Activated CD4-positive, alpha-beta T cell treated with anti-CD3 and anti-CD28 coated beads for 36 hours (primary cell): ENCODE measurements at regions of chr10 and their contacts with region 1.

Region 1: DNA sequence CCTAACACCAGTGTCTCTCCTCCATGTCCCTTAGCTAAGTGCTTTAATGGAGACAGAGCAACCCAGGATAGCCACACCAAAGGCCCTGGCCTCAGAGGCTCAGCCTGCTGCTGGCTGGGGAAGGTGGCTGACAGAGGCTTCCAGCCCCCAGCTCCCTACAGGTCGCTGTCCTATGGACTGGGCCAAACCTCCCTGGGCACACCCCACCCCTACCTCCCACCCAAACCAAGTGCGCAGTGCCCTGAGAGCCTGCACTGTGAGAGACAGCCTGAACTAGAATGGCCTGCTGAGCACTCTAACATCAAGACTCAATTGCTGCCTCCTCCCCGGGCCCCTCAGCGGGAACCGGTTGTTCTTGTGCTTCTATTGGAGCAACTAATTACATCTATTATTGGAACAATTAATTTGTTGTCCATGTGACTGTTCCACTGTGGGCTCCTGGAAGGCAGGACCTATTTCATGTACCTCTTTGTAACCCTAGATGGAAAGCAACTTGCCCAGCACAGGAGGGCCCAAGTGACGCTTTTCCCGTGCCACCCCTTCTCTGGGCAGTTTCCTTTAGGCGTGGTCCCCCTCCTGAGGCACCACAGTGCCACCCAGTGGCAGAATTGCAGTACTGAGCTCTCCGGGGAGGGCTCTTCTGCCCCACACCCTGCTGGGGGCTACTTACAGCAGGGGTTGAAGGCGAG is 63.6 kb upstream of the WAPL start:
- DNase-seq: peak; percentile 85
- ATAC-seq: peak; percentile 98
- H3K4me3 Mint-ChIP-seq: no peak overlapping the region
- H3K27ac Mint-ChIP-seq: no peak overlapping the region
- H3K4me1 Mint-ChIP-seq: peaks cover 2% of the 10 kb centered on the region
- H3K27me3 Mint-ChIP-seq: no peaks in the 10 kb centered on the region

Region 2: GRCh38 chr10:86100581-86101061 is 484.6 kb before region 1 on chr10:
- CTCF ChIA-PET with region 1: no interaction called
- POLR2A ChIA-PET with region 1: no interaction called
- intact Hi-C with region 1: loop called in 1 of 2 experiments (anchors 5 kb)
- DNase-seq: peak; percentile 25
- ATAC-seq: peak; percentile 74
- H3K4me3 Mint-ChIP-seq: no peak overlapping the region
- H3K27ac Mint-ChIP-seq: no peak overlapping the region
- H3K4me1 Mint-ChIP-seq: no peaks in the 10 kb centered on the region
- H3K27me3 Mint-ChIP-seq: peaks cover 2% of the 10 kb centered on the region

Region 3: GRCh38 chr10:86261941-86262687 is 323.1 kb before region 1 on chr10:
- CTCF ChIA-PET with region 1: no interaction called
- POLR2A ChIA-PET with region 1: no interaction called
- intact Hi-C with region 1: loop called in 1 of 2 experiments (anchors 5 kb)
- DNase-seq: peak; percentile 43
- ATAC-seq: peak; percentile 72
- H3K4me3 Mint-ChIP-seq: no peak overlapping the region
- H3K27ac Mint-ChIP-seq: no peak overlapping the region
- H3K4me1 Mint-ChIP-seq: no peaks in the 10 kb centered on the region
- H3K27me3 Mint-ChIP-seq: peaks cover 27% of the 10 kb centered on the region

Region 4: GRCh38 chr10:86945361-86946212 is 360.4 kb after region 1 on chr10:
- CTCF ChIA-PET with region 1: no interaction called
- POLR2A ChIA-PET with region 1: no interaction called
- intact Hi-C with region 1: no loop called
- DNase-seq: no peak
- ATAC-seq: no peak
- H3K4me3 Mint-ChIP-seq: no peak overlapping the region
- H3K27ac Mint-ChIP-seq: no peak overlapping the region
- H3K4me1 Mint-ChIP-seq: peaks cover 4% of the 10 kb centered on the region
- H3K27me3 Mint-ChIP-seq: no peaks in the 10 kb centered on the region